ENCODE measurements at regions of chr6 and their contacts with region 1.

Region 1: DNA sequence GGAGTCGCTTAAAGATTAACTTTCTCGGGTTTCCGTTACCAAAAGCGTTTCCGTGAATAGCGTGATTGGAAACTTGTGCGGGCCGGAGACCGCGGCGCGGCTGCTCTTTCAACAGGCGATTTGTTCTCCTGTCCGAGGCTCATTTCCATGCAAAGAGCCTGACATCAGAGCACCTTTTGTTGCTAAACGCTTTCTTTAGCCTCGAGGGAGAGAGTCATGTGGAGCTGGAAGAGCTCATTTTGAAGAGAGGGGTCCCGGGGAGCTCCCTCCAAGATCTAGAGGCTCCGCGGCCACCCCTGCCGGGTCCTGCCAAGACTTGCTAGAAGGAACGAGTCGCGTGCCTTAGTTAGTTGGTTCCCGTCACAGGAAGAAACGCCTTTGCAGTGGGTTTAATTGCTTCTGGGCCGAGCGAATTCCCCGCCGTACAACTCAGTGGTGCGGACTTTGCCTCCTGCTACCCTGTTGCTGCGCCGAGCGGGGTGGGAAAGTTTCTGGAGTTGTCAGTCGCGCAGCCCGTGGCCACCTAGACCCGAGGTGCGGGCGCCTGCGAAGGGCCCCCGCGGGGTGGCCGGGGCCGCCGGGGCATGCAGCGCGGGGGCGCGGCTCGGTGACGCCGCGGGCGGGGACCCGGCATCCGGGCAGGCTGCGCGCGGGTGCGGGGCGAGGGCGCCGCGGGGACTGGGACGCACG is at the start of gene SASH1:
- DNase-seq: peak; percentile 64 to 79
- ATAC-seq: peak; percentile 73 to 91 (median 78)
- H3K4me3 ChIP-seq: peak within 1 kb of the TSS; percentile 79
- H3K27ac ChIP-seq: peak within 1 kb of the TSS; percentile 69
- H3K4me1 ChIP-seq: peaks cover 7% of the 10 kb centered on the region
- H3K27me3 ChIP-seq: peaks cover 0 to 3% (median 2%) of the 10 kb centered on the region in 3 donors
- CTCF ChIP-seq: no peak
- total RNA-seq, gene SASH1: 13.0 to 26.1 (median 23.0) TPM

Region 2: DNA sequence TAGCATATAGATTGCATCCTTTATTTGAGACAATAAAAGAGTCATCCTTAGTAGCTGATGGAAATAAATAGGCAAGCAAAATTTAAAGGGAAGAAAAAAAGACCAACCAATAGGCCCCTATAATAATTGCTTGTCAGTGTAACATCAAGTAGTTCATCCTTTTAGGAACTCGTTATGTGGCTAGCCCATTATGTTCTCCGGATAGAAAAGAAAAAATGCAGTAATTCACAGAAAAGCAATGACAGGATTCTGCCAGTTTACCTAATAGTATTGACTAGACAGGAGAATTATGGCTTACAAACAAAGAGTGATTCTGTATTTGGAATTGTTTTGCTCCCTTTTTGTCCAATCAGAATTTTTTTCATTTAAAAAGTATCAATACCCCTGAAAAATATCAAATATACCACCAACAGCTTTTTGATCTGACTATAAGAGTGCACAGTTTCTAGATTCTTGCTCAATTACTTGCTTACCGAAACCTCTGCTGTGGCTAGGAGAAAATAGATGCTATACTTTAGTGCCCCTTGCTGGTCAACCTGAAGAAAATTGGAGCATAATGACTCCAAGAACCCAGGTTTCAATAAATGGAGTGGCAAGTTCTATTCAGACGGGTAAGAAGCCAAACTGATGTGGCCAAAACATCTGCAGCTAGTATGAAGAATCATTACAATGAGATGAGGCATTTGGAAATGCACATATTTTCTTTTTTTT is 91.4 kb before region 1 on chr6:
- intact Hi-C with region 1: no loop called
- DNase-seq: no peak
- ATAC-seq: peak in 3 of 4 donors; percentile 61 to 80 (median 64)
- H3K4me3 ChIP-seq: no peak overlapping the region
- H3K27ac ChIP-seq: no peak overlapping the region
- H3K4me1 ChIP-seq: peaks cover 3% of the 10 kb centered on the region
- H3K27me3 ChIP-seq: no peaks in the 10 kb centered on the region
- CTCF ChIP-seq: peak; percentile 51

Region 3: DNA sequence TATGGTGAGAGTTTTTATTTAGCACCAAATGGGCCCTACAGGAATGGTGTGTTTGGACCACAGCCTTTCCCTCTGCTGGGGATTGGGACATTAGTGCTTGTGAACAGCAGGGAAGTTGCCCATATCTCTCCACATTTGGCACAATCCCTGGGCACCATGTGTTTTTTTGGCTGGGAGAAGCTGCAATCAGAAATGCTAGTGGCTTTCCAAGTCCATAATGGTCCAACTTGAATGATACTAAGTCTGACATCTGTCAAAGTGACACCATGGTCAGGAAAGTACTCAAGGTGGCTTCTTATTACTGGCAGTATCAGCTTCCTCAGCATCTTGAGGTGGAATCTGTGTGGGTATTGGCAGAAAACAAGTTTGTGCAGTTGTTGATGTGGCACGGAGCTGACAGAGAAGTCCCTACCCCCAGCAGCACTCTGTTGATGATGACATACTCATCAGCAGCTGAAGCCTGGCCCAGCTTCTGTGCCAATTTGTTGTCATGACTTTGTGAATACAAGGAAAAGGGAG is 53.1 kb after region 1 on chr6:
- intact Hi-C with region 1: loop called in 1 of 2 experiments (anchors 10 kb)
- DNase-seq: no peak
- ATAC-seq: peak; percentile 61 to 89 (median 77)
- H3K4me3 ChIP-seq: no peak overlapping the region
- H3K27ac ChIP-seq: peak overlapping the region; percentile 53
- H3K4me1 ChIP-seq: peaks cover 15% of the 10 kb centered on the region
- H3K27me3 ChIP-seq: no peaks in the 10 kb centered on the region
- CTCF ChIP-seq: no peak

Region 4: DNA sequence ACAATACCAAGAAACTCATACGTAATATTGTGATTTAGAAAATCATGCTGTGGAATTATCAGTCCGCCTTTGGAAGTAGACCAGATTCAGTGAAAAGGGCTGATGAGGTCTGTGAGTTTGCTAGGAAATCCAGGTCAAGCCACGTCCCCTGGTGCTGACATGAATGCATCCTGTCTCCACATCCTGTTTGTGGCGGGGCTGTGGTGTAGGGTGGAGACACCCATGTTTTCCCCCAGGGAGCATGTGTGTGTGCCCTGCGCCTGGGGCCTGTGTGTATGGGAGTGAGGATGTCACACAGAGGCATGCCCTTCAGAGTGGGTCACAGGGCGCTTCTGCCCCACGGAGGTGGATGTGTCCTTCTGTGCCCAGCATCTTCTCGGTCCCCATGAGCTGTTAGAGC is 109.2 kb after region 1 on chr6:
- intact Hi-C with region 1: loop called in 1 of 2 experiments (anchors 10 kb)
- DNase-seq: no peak
- ATAC-seq: no peak
- H3K4me3 ChIP-seq: no peak overlapping the region
- H3K27ac ChIP-seq: no peak overlapping the region
- H3K4me1 ChIP-seq: no peaks in the 10 kb centered on the region
- H3K27me3 ChIP-seq: no peaks in the 10 kb centered on the region
- CTCF ChIP-seq: no peak

Region 5: DNA sequence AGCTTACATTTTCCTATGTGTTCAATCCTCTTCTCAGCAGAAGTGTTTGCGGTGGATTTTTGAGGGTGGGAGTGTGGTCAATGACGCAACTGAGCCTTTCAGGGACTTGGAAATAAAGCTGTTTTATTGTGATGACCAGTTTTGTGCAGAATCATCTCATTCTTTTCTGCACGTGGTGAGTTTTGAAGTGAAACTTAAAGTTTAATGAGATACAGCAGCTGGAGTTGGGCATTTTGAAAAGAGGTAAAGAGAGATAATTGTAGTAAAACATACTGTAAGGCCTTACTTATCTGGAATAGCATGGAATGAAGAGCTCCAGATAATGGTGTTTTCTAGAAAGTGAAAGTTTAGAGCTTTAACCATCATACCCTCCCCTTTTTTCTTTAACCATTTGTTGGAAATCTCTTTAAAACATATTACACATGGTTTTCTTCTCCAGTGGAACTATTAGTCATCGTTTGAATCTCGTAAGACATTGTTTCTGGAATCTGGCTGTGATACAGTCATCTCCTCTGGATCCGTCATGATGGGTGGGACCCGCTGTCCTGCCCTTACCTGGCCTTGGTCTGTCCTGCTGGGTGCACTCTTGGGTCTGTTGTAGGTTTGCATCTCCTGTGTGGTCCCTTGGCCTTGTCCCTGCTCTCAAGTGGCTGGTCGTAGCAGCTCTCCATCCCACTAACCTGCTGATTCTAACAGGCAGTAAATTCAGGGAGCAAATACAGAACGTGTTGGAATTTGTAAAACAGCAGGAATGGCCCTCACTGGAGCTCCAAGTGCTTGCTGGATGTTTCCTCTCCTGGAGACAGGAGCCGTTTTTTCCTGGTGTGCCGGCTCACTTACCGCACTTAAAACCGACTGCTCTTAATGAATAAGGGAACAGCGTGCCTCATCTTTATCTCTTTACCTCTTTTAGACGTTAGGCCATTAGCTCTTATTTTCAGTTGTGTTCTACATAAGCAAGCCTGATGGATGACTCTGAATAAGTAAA is 434.1 kb after region 1 on chr6:
- intact Hi-C with region 1: no loop called
- DNase-seq: no peak
- ATAC-seq: no peak
- H3K4me3 ChIP-seq: no peak overlapping the region
- H3K27ac ChIP-seq: no peak overlapping the region
- H3K4me1 ChIP-seq: no peaks in the 10 kb centered on the region
- H3K27me3 ChIP-seq: no peaks in the 10 kb centered on the region
- CTCF ChIP-seq: no peak